AG04450 (cell line): ENCODE measurements at regions of chr12 and their contacts with region 1.

Region 1: DNA sequence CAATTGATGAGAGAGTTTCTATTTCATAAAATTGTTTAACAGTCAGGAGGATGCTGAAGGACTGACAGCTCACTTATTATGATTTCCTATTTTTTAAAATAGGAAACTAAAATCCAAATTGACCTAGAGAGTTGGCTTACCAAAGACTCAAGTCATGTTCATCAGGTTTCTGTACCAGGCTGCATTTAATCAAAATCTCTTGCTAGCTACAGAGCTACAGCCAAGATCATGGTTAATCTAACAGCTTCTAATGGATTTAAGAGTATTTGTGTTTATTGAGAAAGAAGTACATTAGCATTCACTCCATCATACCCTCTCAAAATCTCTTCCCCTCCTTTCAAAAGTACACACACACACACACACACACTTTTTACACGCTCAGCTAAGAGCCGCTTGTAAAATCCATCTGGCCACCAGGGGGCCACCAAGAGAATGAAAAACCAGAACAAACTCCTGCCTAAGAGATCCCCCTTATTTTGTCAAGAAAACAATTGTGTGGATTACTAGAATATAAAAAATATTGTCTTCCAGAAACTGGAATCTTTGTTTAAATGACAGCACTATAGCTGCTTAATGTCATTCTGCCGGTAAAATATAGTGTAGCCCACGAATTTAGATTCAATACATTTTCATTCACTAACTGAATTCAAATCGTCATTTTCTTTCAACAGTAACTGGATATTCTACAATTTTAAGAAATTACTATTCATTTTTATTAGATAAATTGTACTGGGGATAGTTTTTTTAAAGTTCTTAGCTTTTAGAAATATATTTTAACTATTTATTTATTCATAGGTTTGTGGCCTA is 334.0 kb downstream of the BTG1 start:
- DNase-seq: peak; percentile 21
- H3K4me3 ChIP-seq: no peak overlapping the region
- H3K27ac ChIP-seq: no peak overlapping the region
- H3K27me3 ChIP-seq: no peaks in the 10 kb centered on the region
- CTCF ChIP-seq: peak; percentile 88

Region 2: GRCh38 chr12:91801048-91801447 is 10.6 kb before region 1 on chr12:
- CTCF ChIA-PET with region 1: interaction called, 39 read pairs
- POLR2A ChIA-PET with region 1: no interaction called
- DNase-seq: no peak
- H3K4me3 ChIP-seq: no peak overlapping the region
- H3K27ac ChIP-seq: no peak overlapping the region
- H3K27me3 ChIP-seq: no peaks in the 10 kb centered on the region
- CTCF ChIP-seq: no peak

Region 3: DNA sequence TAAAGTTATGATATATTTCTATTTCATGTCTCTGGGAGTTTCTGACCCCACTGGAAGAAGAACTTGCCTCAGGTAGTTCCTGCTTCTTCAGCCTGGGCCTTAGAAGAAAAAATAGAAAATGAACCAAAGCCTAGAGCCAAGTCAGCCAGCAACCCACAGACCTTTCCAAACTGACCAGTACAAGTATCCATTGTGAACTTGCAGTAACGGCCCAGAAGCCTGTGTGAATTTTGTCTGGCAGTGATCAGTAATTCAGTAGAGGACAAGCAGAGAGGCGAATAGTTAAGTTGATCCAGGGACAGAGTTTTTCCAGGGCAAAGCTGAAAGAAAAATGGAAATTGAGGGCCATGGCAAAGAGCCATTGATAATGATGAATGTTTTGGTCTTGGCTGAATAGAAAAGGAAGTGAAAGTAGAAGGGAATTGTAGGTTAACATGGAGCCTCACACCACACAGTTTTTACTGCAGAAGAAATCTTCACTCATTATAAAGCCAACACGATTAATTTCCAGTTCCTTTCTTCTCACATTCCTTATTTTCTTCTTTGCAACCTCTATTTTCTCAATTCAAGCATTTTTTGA is 22.2 kb after region 1 on chr12:
- CTCF ChIA-PET with region 1: interaction called, 28 read pairs
- POLR2A ChIA-PET with region 1: no interaction called
- DNase-seq: no peak
- H3K4me3 ChIP-seq: no peak overlapping the region
- H3K27ac ChIP-seq: no peak overlapping the region
- H3K27me3 ChIP-seq: no peaks in the 10 kb centered on the region
- CTCF ChIP-seq: no peak

Region 4: GRCh38 chr12:92105676-92106075 is 294.0 kb after region 1 on chr12:
- CTCF ChIA-PET with region 1: interaction called, 10 read pairs
- POLR2A ChIA-PET with region 1: no interaction called
- DNase-seq: no peak
- H3K4me3 ChIP-seq: no peak overlapping the region
- H3K27ac ChIP-seq: no peak overlapping the region
- H3K27me3 ChIP-seq: no peaks in the 10 kb centered on the region
- CTCF ChIP-seq: no peak

Region 5: DNA sequence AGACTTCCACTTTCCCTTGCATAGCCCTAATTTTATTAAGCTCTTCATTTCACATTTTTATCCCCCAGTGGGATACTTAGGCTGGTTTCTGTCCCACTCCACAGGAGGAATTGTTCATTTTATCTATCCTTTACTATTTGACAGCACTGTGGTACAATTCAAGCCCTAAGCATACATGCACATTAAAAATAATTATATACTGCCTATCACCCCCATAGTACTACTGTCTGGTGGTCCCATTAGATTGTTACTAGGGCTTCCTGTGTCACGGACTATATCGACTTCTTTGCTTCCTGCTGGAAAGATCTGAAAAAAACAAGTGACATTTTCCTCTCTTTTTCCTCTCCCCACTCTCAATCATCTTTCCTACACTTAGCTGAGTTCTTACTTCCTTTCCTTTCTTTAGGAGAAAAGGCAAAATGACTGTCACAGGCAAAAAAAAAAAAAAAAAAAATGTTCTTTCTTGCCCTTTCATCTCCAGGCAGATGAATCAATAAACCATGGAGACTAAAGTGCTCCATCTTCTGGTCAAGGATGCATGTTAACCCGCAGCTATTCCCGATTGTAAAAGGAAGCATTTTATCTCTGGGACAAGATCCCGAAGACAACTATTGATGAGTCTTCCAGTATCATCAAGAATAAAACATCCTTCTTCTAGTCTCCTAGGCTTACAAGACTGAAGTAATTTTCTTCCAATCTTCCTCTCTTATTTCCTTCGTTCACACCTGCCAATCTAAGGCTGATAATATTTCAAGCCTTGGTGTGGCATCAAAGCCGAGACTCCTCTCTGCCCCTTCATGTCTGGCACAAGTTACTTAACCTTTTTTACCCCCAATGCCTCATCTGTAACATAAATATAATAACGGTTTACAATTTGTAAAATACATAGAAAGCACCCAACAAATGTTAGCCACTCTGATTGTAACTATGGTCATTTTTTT is 796.7 kb after region 1 on chr12:
- CTCF ChIA-PET with region 1: interaction called, 16 read pairs
- POLR2A ChIA-PET with region 1: no interaction called
- DNase-seq: no peak
- H3K4me3 ChIP-seq: no peak overlapping the region
- H3K27ac ChIP-seq: no peak overlapping the region
- H3K27me3 ChIP-seq: no peaks in the 10 kb centered on the region
- CTCF ChIP-seq: peak; percentile 72